Posterior vena cava (tissue), 2 donors: ENCODE measurements at regions of chr10 and their contacts with region 1.

Region 1: DNA sequence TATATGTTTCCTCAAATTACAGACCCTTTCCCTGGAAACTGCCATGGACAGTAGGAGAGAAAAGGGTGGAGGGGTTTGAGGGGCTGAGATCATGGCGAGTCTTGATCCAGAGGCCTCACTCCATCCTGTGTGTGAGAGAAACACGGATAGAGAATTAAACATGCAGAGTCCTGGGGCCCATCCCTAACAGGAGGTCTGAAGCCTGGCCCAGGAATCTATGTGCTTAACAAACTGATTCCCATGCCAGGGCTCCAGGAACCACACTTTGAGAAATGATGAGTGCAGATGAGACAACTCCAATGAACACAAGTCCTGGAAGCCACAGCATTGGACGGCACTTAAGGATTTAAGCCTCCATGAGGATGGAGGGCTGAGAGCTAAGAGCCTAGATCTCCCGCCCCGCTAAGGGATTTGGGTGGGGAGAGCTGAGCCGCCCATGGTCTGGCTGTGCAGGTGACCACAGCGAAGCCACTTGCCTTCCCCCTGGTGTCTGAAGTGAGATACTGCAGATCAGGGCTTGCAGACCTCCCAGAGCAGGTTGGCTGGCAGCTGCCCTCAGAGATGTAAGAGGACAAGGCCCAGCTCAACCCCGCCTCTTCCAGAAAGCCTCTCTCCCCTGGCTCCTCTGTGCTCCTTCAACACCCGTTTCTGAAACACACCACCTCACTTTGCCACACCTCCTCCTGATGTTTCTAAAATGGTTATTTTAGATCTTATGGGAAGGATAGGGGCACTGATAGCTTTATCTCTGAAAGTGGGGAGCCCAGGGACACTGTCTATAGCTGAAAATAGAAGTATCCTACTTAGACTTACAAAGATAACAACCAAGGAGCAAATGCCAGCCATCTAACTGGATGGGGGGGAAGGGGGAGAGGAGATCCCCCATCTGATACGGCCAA is 24.8 kb upstream of the EIF5AL1 start:
- DNase-seq: peak; percentile 84

Region 2: GRCh38 chr10:79438699-79439085 is 48.9 kb before region 1 on chr10:
- intact Hi-C with region 1: loop called in 1 of 2 experiments (anchors 1 kb)
- DNase-seq: no peak